Endothelial cell of umbilical vein (primary cell): ENCODE measurements at regions of chr9 and their contacts with region 1.

Region 1: GRCh38 chr9:613771-614347 is 227.6 kb upstream of the DMRT1 start:
- DNase-seq: peak; percentile 95
- H3K4me3 ChIP-seq: no peak overlapping the region
- H3K27ac ChIP-seq: peak overlapping the region; percentile 2
- H3K4me1 ChIP-seq: peaks cover 11% of the 10 kb centered on the region
- H3K27me3 ChIP-seq: no peaks in the 10 kb centered on the region
- CTCF ChIP-seq: peak; percentile 82 to 92
- POLR2A ChIP-seq: no peak

Region 2: DNA sequence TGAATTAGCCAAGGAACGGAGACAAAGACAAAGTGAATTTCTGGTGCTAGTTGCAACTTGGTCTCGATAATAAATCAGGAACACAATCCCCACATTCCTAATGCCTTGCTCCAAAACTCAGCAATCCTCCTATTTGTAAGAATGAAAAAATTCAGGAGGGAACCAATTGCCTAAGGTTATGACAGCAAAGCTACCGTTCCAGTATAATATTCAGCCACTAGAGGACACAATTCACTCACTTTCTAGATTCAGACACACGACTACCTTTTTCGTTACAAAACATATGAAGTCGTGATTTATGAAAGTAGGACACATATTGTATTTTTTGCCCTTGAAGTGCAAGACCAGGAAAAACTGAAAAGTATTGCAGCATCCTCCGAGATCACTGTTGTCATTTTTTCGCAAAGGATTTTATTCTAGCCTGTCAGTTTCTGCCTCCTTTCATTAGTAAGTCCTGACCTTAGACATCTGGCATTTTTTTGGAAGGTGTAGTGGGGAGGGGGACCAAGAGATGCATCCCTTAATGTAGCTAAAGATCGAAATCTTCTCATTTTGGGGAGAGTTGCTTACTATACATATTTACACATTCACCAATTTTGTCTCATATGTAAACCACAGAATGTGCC is 266.1 kb before region 1 on chr9:
- CTCF ChIA-PET with region 1: no interaction called
- POLR2A ChIA-PET with region 1: no interaction called
- dilution Hi-C with region 1: no loop called
- intact Hi-C with region 1: loop called (anchors 5 kb)
- DNase-seq: peak; percentile 37
- H3K4me3 ChIP-seq: no peak overlapping the region
- H3K27ac ChIP-seq: no peak overlapping the region
- H3K4me1 ChIP-seq: no peaks in the 10 kb centered on the region
- H3K27me3 ChIP-seq: no peaks in the 10 kb centered on the region
- CTCF ChIP-seq: peak; percentile 32 to 39
- POLR2A ChIP-seq: no peak

Region 3: GRCh38 chr9:600007-600406 is 13.9 kb before region 1 on chr9:
- CTCF ChIA-PET with region 1: interaction called, 4 read pairs
- POLR2A ChIA-PET with region 1: no interaction called
- dilution Hi-C with region 1: no loop called
- intact Hi-C with region 1: loop called (anchors 2 kb)
- DNase-seq: no peak
- H3K4me3 ChIP-seq: no peak overlapping the region
- H3K27ac ChIP-seq: no peak overlapping the region
- H3K4me1 ChIP-seq: no peaks in the 10 kb centered on the region
- H3K27me3 ChIP-seq: peaks cover 0 to 4% of the 10 kb centered on the region in 2 experiments
- CTCF ChIP-seq: no peak
- POLR2A ChIP-seq: no peak

Region 4: GRCh38 chr9:693201-694091 is 79.6 kb after region 1 on chr9:
- CTCF ChIA-PET with region 1: interaction called, 3 read pairs
- POLR2A ChIA-PET with region 1: no interaction called
- dilution Hi-C with region 1: no loop called
- intact Hi-C with region 1: loop called (anchors 1 kb)
- DNase-seq: peak; percentile 92
- H3K4me3 ChIP-seq: peak overlapping the region in 2 of 3 experiments; percentile 18 to 67
- H3K27ac ChIP-seq: peak overlapping the region; percentile 86
- H3K4me1 ChIP-seq: peaks cover 66% of the 10 kb centered on the region
- H3K27me3 ChIP-seq: no peaks in the 10 kb centered on the region
- CTCF ChIP-seq: no peak
- POLR2A ChIP-seq: peak; percentile 72

Region 5: GRCh38 chr9:757246-757881 is 143.5 kb after region 1 on chr9:
- CTCF ChIA-PET with region 1: interaction called, 23 read pairs
- POLR2A ChIA-PET with region 1: no interaction called
- dilution Hi-C with region 1: loop called (anchors 25 kb)
- intact Hi-C with region 1: loop called (anchors 1 kb)
- DNase-seq: peak; percentile 67
- H3K4me3 ChIP-seq: no peak overlapping the region
- H3K27ac ChIP-seq: no peak overlapping the region
- H3K4me1 ChIP-seq: peaks cover 24% of the 10 kb centered on the region
- H3K27me3 ChIP-seq: no peaks in the 10 kb centered on the region
- CTCF ChIP-seq: peak; percentile 42 to 66
- POLR2A ChIP-seq: no peak

Region 6: DNA sequence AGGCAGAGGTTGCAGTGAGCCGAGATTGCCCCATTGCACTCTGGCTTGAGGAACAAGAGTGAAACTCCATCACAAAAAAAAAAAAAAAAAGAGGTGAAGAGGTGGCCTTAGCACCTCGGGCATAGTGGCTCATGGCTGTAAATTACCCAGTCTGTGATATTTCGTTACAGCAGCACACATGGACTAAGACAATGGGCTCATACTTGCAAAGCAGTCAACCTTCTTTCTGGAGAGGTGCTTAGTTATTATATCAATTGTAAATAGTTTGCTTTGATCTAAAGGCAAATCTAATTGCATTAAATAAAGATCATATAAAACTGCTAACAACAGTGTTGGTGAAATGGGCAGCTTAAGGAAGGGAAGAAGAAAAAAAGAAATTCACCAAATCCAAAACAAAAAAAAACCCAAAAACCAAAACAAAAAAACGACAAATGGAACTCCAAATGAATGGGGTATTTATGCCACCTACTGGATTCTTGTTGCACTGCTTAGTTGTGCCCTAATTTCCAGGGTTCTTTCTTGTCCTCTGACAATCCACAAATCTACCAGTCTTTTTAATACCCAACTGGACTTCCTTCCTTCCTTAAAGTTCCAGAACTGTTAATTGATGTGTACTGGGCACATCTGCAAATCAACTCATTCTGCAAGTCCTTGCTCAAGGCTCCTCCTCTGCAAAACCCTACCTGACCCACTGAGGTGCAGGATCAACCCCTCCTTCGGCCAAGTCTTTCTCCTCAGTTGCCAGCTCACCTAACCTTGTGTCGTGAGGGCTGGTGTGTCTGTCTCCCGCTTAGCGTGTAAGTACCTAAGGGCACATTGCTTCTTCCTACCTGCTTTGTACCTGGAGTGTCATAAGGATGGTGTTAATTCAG is 192.7 kb after region 1 on chr9:
- CTCF ChIA-PET with region 1: interaction called, 6 read pairs
- POLR2A ChIA-PET with region 1: no interaction called
- dilution Hi-C with region 1: no loop called
- intact Hi-C with region 1: loop called (anchors 1 kb)
- DNase-seq: peak; percentile 50
- H3K4me3 ChIP-seq: no peak overlapping the region
- H3K27ac ChIP-seq: no peak overlapping the region
- H3K4me1 ChIP-seq: peaks cover 33% of the 10 kb centered on the region
- H3K27me3 ChIP-seq: no peaks in the 10 kb centered on the region
- CTCF ChIP-seq: peak; percentile 56 to 68
- POLR2A ChIP-seq: no peak

Region 7: DNA sequence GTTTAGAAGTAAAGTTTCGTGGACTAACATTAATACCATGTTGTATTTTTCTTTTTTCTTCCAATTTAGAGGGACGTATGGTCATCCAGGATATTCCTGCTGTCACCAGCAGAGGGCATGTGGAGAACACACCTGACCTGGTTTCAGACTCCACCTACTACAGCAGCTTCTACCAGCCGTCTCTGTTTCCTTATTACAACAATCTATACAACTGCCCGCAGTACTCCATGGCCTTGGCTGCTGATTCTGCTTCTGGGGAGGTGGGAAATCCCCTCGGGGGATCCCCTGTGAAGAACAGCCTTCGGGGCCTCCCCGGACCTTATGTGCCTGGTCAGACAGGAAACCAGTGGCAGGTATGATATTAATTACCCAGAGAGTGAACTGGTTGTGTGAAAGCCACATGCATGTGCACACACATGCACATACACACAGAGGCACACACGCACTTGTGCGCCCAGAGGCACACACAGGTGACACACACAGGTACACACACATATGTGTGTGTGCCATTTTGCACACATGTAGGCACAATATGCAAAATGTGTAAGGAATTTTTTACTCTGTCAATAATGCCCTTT is 280.1 kb after region 1 on chr9:
- CTCF ChIA-PET with region 1: no interaction called
- POLR2A ChIA-PET with region 1: no interaction called
- dilution Hi-C with region 1: no loop called
- intact Hi-C with region 1: loop called (anchors 5 kb)
- DNase-seq: peak; percentile 34
- H3K4me3 ChIP-seq: no peak overlapping the region
- H3K27ac ChIP-seq: no peak overlapping the region
- H3K4me1 ChIP-seq: no peaks in the 10 kb centered on the region
- H3K27me3 ChIP-seq: no peaks in the 10 kb centered on the region
- CTCF ChIP-seq: peak; percentile 63 to 66
- POLR2A ChIP-seq: no peak